IMR-90 (cell line): ENCODE measurements at regions of chr15 and their contacts with region 1.

Region 1: GRCh38 chr15:57485869-57486268 is 105.8 kb upstream of the MYZAP start:
- DNase-seq: peak; percentile 83
- ATAC-seq: peak; percentile 99
- H3K4me3 ChIP-seq: no peak overlapping the region
- H3K27ac ChIP-seq: no peak overlapping the region; the same call in 1 of the 2 replicates
- H3K4me1 ChIP-seq: peaks cover 8% of the 10 kb centered on the region
- H3K27me3 ChIP-seq: no peaks in the 10 kb centered on the region
- CTCF ChIP-seq: no peak
- POLR2A ChIP-seq: no peak
- RAD21 ChIP-seq: no peak

Region 2: DNA sequence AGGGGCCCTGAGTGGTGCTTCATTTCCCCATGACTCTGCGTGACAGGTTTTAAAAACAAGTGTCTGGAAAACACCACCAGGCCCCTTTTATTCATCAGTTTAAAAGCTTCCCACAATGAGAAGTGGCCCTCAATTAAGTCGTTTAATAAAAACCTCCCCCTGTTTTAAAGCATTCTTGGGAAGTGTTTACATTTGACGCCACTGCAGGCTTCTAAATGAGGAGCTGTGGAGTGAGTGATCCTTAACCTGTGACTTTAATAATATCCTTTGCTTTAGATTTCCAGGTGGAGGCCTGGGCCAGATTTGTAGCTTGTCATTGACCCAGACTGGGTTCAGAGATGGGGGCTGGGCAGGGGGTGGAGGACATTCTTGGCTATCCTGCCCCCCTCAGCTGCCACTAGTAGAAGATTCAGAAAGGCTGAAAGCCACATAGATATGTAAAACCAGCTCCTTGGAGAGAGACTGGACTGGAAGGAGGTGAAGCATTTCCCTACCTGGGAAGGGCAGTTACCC is 98.2 kb before region 1 on chr15:
- CTCF ChIA-PET with region 1: no interaction called
- POLR2A ChIA-PET with region 1: no interaction called
- dilution Hi-C with region 1: no loop called
- in situ Hi-C with region 1: no loop called
- intact Hi-C with region 1: loop called (anchors 5 kb)
- DNase-seq: no peak
- ATAC-seq: no peak
- H3K4me3 ChIP-seq: no peak overlapping the region
- H3K27ac ChIP-seq: no peak overlapping the region
- H3K4me1 ChIP-seq: peaks cover 3% of the 10 kb centered on the region
- H3K27me3 ChIP-seq: peaks cover 23% of the 10 kb centered on the region
- CTCF ChIP-seq: no peak
- POLR2A ChIP-seq: no peak
- RAD21 ChIP-seq: no peak

Region 3: GRCh38 chr15:57444877-57445513 is 40.9 kb before region 1 on chr15:
- CTCF ChIA-PET with region 1: no interaction called
- POLR2A ChIA-PET with region 1: no interaction called
- dilution Hi-C with region 1: no loop called
- in situ Hi-C with region 1: no loop called
- intact Hi-C with region 1: no loop called
- DNase-seq: no peak
- ATAC-seq: no peak
- H3K4me3 ChIP-seq: no peak overlapping the region
- H3K27ac ChIP-seq: no peak overlapping the region
- H3K4me1 ChIP-seq: no peaks in the 10 kb centered on the region
- H3K27me3 ChIP-seq: peaks cover 2% of the 10 kb centered on the region; the same call in 1 of the 2 replicates
- CTCF ChIP-seq: no peak
- POLR2A ChIP-seq: no peak
- RAD21 ChIP-seq: no peak

Region 4: GRCh38 chr15:57510647-57511046 is 24.8 kb after region 1 on chr15:
- CTCF ChIA-PET with region 1: no interaction called
- POLR2A ChIA-PET with region 1: interaction called, 11 read pairs
- dilution Hi-C with region 1: no loop called
- in situ Hi-C with region 1: no loop called
- intact Hi-C with region 1: no loop called
- DNase-seq: peak; percentile 93
- ATAC-seq: peak; percentile 87
- H3K4me3 ChIP-seq: no peak overlapping the region
- H3K27ac ChIP-seq: no peak overlapping the region
- H3K4me1 ChIP-seq: peaks cover 5% of the 10 kb centered on the region
- H3K27me3 ChIP-seq: no peaks in the 10 kb centered on the region
- CTCF ChIP-seq: no peak
- POLR2A ChIP-seq: no peak
- RAD21 ChIP-seq: no peak

Region 5: DNA sequence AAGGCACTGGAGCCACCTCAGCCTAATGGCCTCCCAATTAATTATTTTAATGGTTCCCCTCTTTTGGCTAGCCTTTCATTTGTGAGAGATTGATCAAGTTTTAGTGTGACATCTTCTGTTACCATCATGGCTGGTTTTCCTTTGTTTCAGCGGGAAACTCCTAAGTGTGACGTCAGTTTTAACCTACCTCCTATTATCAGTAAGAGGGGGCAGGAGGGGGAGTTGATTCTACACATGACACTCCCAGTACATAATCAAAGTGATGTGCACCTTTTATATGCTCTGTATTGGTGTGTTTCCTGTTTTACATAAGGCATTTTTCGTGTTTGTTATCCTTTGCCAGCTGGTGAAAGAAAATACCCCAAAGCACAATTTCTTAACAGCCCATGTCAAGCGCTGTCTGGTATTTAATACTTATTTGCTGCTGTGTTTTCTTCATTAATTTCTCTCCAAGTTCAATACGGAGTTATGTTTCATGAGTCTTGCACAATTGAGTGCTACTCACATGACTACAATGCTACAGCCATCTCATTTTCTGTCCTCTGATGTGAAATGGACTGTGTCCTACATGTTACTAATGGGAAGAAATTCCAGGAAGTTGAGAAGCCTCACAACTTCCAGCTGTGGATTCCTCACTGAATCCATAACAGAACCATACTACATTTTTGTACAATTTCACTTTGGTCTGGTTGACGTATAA is 168.4 kb after region 1 on chr15:
- CTCF ChIA-PET with region 1: no interaction called
- POLR2A ChIA-PET with region 1: no interaction called
- dilution Hi-C with region 1: no loop called
- in situ Hi-C with region 1: no loop called
- intact Hi-C with region 1: no loop called
- DNase-seq: peak; percentile 27
- ATAC-seq: no peak; the same call in 1 of the 2 replicates
- H3K4me3 ChIP-seq: no peak overlapping the region
- H3K27ac ChIP-seq: no peak overlapping the region
- H3K4me1 ChIP-seq: no peaks in the 10 kb centered on the region
- H3K27me3 ChIP-seq: peaks cover 2% of the 10 kb centered on the region
- CTCF ChIP-seq: no peak
- POLR2A ChIP-seq: no peak
- RAD21 ChIP-seq: no peak